Psoas muscle (tissue), 8 donors: ENCODE measurements at regions of chr17 and their contacts with region 1.

Region 1: DNA sequence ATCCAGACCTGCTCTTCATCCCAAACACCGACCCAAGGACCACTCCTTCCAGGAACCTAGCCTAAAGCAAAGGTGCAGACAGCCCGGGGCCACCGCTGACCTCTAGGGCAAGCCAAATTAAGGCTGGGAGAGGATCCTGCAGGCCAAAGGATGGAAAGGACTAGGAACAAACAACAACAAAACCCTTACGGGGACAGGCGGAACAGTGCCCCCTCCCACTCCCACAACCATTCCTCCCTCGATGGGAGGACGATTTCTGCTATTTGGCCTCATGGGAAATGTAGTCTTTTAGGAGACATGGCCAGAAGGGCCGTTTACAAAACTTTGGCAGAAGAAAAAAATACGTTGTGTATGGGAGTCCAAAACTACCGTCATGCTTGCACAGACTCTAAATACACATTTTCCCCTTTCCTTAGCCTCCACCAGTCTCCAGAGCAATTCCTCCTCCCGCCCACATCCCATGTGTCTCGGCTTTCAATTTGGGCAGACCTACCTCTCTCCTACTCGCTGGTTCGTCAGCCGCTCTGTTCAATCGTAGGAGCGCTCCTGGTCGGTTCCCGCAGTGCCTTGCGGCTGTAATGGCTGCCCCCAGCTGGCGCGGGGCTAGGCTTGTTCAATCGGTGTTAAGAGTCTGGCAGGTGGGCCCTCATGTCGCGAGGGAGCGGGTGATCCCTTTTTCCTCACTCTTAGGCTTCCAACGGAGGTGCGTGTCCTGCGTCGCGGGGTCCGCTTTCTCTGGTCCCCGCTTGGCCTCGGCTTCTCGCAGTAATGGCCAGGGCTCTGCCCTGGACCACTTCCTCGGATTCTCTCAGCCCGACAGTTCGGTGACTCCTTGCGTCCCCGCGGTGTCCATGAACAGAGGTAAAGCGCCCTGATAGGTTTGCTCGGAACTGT is at the start of gene ERAL1:
- DNase-seq: peak; percentile 86 to 91
- ATAC-seq: peak; percentile 98 to 99 (median 99)
- H3K4me3 ChIP-seq: peak within 1 kb of the TSS; percentile 96
- H3K27ac ChIP-seq: peak within 1 kb of the TSS; percentile 86
- H3K4me1 ChIP-seq: peaks cover 11% of the 10 kb centered on the region
- H3K27me3 ChIP-seq: no peaks in the 10 kb centered on the region
- CTCF ChIP-seq: no peak
- total RNA-seq, gene ERAL1: 38.3 to 45.6 (median 43.4) TPM

Region 2: DNA sequence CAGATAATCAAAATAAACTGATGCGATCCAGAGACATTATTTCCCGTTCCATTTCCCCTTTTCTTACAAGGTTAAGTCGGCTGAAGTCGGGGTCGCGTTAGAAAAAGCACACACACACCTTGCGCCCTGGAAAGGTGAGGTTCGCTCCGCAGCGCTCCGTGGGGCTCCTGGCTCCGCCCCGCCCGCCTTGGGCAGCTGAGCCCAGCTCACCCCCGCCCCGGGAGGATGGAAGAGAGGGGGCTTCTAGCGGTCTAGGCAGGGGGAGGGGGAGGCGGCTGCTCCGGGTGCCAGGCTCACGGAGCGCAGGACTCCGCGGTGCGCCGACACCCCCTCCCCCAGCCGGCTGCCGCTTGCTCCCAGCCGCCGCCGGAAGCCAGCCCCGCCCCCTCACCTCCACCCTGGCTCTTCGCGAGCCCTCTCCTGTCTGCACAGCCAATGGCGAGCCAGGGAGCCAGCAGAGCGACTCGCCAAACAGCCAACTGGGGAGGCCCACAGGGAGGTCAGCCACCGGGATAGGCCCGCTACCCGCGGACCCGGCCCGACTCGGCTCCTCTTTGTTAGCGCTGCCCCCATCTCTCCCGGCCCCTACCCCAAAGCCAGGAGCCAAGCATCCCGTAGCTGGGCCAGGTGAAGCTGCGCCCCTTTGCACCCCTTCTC is 42.5 kb before region 1 on chr17:
- intact Hi-C with region 1: loop called in 1 of 2 experiments (anchors 5 kb)
- DNase-seq: peak; percentile 98 to 99
- ATAC-seq: peak; percentile 90 to 99 (median 95)
- H3K4me3 ChIP-seq: peak overlapping the region; percentile 91
- H3K27ac ChIP-seq: peak overlapping the region; percentile 91
- H3K4me1 ChIP-seq: peaks cover 43% of the 10 kb centered on the region
- H3K27me3 ChIP-seq: no peaks in the 10 kb centered on the region
- CTCF ChIP-seq: no peak

Region 3: GRCh38 chr17:28896884-28897768 is 42.4 kb after region 1 on chr17 and contains the start of gene FLOT2:
- intact Hi-C with region 1: loop called (anchors 5 kb)
- DNase-seq: peak; percentile 65 to 77
- ATAC-seq: peak; percentile 75 to 87 (median 82)
- H3K4me3 ChIP-seq: peak within 1 kb of the TSS; percentile 91
- H3K27ac ChIP-seq: peak within 1 kb of the TSS; percentile 92
- H3K4me1 ChIP-seq: peaks cover 27% of the 10 kb centered on the region
- H3K27me3 ChIP-seq: no peaks in the 10 kb centered on the region
- CTCF ChIP-seq: peak; percentile 11
- total RNA-seq, gene FLOT2: 40.8 to 81.1 (median 43.9) TPM

Region 4: DNA sequence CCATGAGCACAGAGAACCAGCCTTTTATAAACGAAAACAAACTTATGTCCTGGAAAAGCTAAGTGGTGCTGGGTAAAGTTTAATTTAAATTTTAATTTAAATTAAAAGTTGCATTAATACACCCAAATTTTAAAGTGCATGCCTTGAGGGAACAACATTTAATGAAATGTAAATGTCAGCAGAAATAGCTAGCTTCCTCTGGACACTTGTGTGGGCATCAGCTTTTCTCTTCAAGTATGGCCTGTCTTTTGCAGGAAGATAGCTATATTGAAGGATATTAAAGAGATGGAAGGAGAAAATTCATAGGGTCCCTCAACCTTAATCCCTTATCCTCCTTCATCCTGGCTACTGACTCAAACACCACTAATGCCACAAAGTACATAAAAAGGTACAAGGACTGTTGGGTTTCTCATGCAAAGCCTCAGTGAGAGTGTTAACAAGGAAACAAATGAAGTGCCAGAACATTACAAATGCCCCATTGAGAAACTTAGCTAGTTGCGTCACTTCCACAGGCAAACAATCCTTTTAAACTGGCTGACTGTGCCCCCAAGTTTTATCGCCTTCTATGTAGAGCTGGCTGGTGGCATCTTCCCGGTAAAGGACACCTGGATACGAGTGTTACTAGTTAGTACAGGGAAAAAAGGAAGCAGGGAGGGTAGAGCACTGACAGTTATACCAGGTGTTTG is 82.5 kb after region 1 on chr17:
- intact Hi-C with region 1: no loop called
- DNase-seq: no peak
- ATAC-seq: peak in 3 of 4 donors; percentile 31 to 66 (median 47)
- H3K4me3 ChIP-seq: no peak overlapping the region
- H3K27ac ChIP-seq: peak overlapping the region; percentile 80
- H3K4me1 ChIP-seq: peaks cover 87% of the 10 kb centered on the region
- H3K27me3 ChIP-seq: no peaks in the 10 kb centered on the region
- CTCF ChIP-seq: no peak